ENCODE measurements at regions of chr1 and their contacts with region 1.

Region 1: DNA sequence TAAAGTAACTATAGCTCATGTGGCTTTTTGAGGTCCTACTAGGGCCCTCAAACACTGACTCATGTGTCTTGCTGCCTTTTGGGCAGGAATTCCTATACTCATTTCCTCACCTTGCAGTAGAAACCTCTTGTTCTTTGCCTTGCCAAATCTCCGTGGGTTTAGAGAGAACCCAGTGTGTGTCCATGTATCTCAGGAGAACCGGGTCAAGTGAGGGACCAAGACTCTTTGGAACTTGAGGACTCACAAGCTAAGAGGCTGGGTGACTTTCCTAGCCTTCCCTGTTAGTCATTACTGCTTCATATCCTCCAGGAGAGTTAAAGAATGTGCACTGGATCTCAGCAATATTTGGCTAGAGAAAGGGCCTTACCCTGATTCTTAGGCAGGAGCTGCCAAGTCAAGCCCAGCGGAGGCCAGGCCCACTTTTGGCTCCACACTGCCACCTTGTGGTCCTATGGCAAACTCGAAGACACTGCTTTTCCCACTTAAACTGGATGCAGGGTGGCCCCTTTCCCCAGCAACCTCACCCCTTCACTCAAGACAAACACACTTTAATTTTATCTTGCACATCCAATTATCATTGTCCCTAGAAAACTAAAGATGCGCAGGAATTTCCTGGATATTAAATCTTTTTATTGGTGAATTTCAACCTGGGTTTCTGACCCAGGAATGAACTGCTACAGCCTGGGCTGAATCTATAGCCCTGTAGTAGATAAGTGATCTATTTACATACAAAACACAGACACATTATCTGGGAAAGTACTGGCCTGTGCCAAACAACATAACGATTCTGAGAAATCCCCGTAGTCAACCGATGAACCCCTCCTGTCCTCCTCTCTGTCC is 10.6 kb downstream of the AVPR1B start:
- DNase-seq: peak; percentile 86
- ATAC-seq: peak; percentile 90

Region 2: GRCh38 chr1:205791568-205792180 is 314.9 kb before region 1 on chr1:
- intact Hi-C with region 1: loop called (anchors 10 kb)
- DNase-seq: peak; percentile 64
- ATAC-seq: peak; percentile 59

Region 3: GRCh38 chr1:205986252-205986651 is 120.3 kb before region 1 on chr1:
- intact Hi-C with region 1: loop called (anchors 2 kb)
- DNase-seq: no peak
- ATAC-seq: no peak

Region 4: GRCh38 chr1:206032380-206033140 is 74.0 kb before region 1 on chr1:
- intact Hi-C with region 1: loop called (anchors 2 kb)
- DNase-seq: no peak
- ATAC-seq: no peak

Measured in Right ventricle myocardium superior (tissue), 1 donor.